Heart left ventricle (tissue), 16 donors: ENCODE measurements at regions of chr11 and their contacts with region 1.

Region 1: GRCh38 chr11:9601037-9601875 is 27.8 kb downstream of the WEE1 start:
- DNase-seq: peak in 4 of 5 donors; percentile 19 to 42 (median 30)
- ATAC-seq: peak in 3 of 4 donors; percentile 65 to 73 (median 73)
- H3K4me3 ChIP-seq: peak overlapping the region in 1 of 12 donors; percentile 44
- H3K27ac ChIP-seq: peak overlapping the region in 5 of 12 donors; percentile 4 to 92 (median 39)
- H3K4me1 ChIP-seq: peaks cover 0 to 11% (median 4%) of the 10 kb centered on the region in 12 donors
- H3K27me3 ChIP-seq: no peaks in the 10 kb centered on the region
- CTCF ChIP-seq: no peak
- POLR2A ChIP-seq: no peak

Region 2: GRCh38 chr11:9534791-9535781 is 66.2 kb before region 1 on chr11:
- intact Hi-C with region 1: loop called in 2 of 10 experiments (anchors 10 kb)
- DNase-seq: peak; percentile 62 to 88 (median 75)
- ATAC-seq: peak; percentile 49 to 87 (median 80)
- H3K4me3 ChIP-seq: no peak overlapping the region
- H3K27ac ChIP-seq: no peak overlapping the region
- H3K4me1 ChIP-seq: peaks cover 0 to 12% (median 2%) of the 10 kb centered on the region in 12 donors
- H3K27me3 ChIP-seq: no peaks in the 10 kb centered on the region
- CTCF ChIP-seq: peak; percentile 59 to 88 (median 74)
- POLR2A ChIP-seq: no peak